Left ventricle myocardium inferior (tissue), 1 donor: ENCODE measurements at regions of chr6 and their contacts with region 1.

Region 1: GRCh38 chr6:56699066-56699654 is 56.5 kb upstream of the DST start:
- DNase-seq: no peak
- H3K4me3 ChIP-seq: no peak overlapping the region
- H3K27ac ChIP-seq: no peak overlapping the region
- H3K4me1 ChIP-seq: peaks cover 37% of the 10 kb centered on the region
- H3K27me3 ChIP-seq: no peaks in the 10 kb centered on the region
- CTCF ChIP-seq: peak; percentile 72

Region 2: GRCh38 chr6:56463443-56463842 is 235.7 kb before region 1 on chr6:
- intact Hi-C with region 1: no loop called
- DNase-seq: no peak
- H3K4me3 ChIP-seq: no peak overlapping the region
- H3K27ac ChIP-seq: no peak overlapping the region
- H3K4me1 ChIP-seq: peaks cover 6% of the 10 kb centered on the region
- H3K27me3 ChIP-seq: no peaks in the 10 kb centered on the region
- CTCF ChIP-seq: no peak

Region 3: GRCh38 chr6:56637640-56638039 is 61.5 kb before region 1 on chr6:
- intact Hi-C with region 1: loop called (anchors 5 kb)
- DNase-seq: no peak
- H3K4me3 ChIP-seq: no peak overlapping the region
- H3K27ac ChIP-seq: peak overlapping the region; percentile 7
- H3K4me1 ChIP-seq: peaks cover 9% of the 10 kb centered on the region
- H3K27me3 ChIP-seq: no peaks in the 10 kb centered on the region
- CTCF ChIP-seq: peak; percentile 82